Activated CD8-positive, alpha-beta memory T cell treated with anti-CD3 and anti-CD28 coated beads, Interleukin-2, amount 10 ng/mL, durations not matched to agents 7 days and 5 days (primary cell): ENCODE measurements at regions of chr10 and their contacts with region 1.

Region 1: GRCh38 chr10:69914398-69915214 is 112.9 kb downstream of the COL13A1 start:
- DNase-seq: peak; percentile 72
- ATAC-seq: peak; percentile 85
- H3K4me3 Mint-ChIP-seq: no peak overlapping the region
- H3K27ac Mint-ChIP-seq: no peak overlapping the region
- H3K4me1 Mint-ChIP-seq: no peaks in the 10 kb centered on the region
- H3K27me3 Mint-ChIP-seq: peaks cover 9% of the 10 kb centered on the region

Region 2: GRCh38 chr10:69609077-69609476 is 305.5 kb before region 1 on chr10:
- CTCF ChIA-PET with region 1: no interaction called
- DNase-seq: no peak
- ATAC-seq: no peak
- H3K4me3 Mint-ChIP-seq: no peak overlapping the region
- H3K27ac Mint-ChIP-seq: no peak overlapping the region
- H3K4me1 Mint-ChIP-seq: no peaks in the 10 kb centered on the region
- H3K27me3 Mint-ChIP-seq: peaks cover 18% of the 10 kb centered on the region

Region 3: DNA sequence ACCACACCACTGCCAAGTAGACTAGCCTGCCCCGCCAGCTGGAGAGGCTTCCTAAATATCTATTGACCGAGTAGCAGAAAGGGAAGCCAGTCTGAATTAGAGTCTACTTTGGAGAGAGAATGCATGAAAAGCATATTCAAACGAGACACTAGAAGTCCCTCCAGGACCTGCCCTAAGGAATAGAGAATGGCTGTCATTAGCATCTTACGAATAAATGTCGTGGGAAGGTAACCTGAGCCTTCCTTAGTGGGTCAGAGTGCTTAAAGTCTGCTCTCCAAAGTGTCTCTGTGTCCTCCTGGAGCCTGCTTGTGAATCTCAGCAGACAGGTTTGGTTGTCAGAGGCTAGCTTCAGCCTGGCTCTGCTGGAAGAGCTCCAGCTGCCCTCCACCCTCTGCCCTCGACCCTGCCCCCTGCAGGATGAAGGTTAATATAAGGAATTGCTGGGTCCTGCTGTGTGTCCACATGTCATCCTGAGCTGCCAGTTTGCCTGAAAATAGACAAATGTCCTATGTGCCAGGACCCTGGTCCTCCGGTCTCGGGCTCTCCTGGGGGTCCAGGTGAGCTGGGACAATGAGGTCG is 251.1 kb before region 1 on chr10:
- CTCF ChIA-PET with region 1: no interaction called
- DNase-seq: no peak
- ATAC-seq: no peak
- H3K4me3 Mint-ChIP-seq: no peak overlapping the region
- H3K27ac Mint-ChIP-seq: no peak overlapping the region
- H3K4me1 Mint-ChIP-seq: no peaks in the 10 kb centered on the region
- H3K27me3 Mint-ChIP-seq: peaks cover 28% of the 10 kb centered on the region

Region 4: DNA sequence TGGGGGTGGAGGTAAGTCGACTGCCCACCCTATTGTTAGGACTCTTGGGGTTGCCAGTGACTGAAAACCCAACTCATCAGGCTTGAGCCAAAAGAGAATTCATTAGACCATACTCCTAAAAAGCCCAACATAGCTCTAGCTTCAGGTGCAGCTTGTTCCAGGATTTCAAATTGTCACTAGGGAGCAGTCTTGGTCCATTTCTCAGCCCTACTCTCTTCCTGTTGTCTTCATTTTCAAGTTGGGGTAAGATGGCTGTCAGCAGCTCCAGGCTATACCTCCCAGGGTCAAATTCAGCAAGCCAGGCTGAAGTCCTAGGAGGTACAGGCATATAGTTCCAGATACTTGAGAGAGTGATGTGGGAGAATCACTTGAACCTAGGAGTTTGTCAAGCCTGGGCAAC is 127.8 kb before region 1 on chr10:
- CTCF ChIA-PET with region 1: interaction called, 10 read pairs
- DNase-seq: no peak
- ATAC-seq: no peak
- H3K4me3 Mint-ChIP-seq: no peak overlapping the region
- H3K27ac Mint-ChIP-seq: no peak overlapping the region
- H3K4me1 Mint-ChIP-seq: no peaks in the 10 kb centered on the region
- H3K27me3 Mint-ChIP-seq: peaks cover 13% of the 10 kb centered on the region

Region 5: GRCh38 chr10:69861251-69862240 is 53.1 kb before region 1 on chr10:
- CTCF ChIA-PET with region 1: interaction called, 14 read pairs
- DNase-seq: no peak
- ATAC-seq: peak; percentile 64
- H3K4me3 Mint-ChIP-seq: no peak overlapping the region
- H3K27ac Mint-ChIP-seq: no peak overlapping the region
- H3K4me1 Mint-ChIP-seq: peaks cover 5% of the 10 kb centered on the region
- H3K27me3 Mint-ChIP-seq: peaks cover 2% of the 10 kb centered on the region

Region 6: GRCh38 chr10:69904533-69904932 is 10.1 kb before region 1 on chr10:
- CTCF ChIA-PET with region 1: interaction called, 14 read pairs
- DNase-seq: no peak
- ATAC-seq: no peak
- H3K4me3 Mint-ChIP-seq: no peak overlapping the region
- H3K27ac Mint-ChIP-seq: no peak overlapping the region
- H3K4me1 Mint-ChIP-seq: no peaks in the 10 kb centered on the region
- H3K27me3 Mint-ChIP-seq: peaks cover 4% of the 10 kb centered on the region

Region 7: GRCh38 chr10:69925111-69925510 is 10.5 kb after region 1 on chr10:
- CTCF ChIA-PET with region 1: interaction called, 20 read pairs
- DNase-seq: no peak
- ATAC-seq: no peak
- H3K4me3 Mint-ChIP-seq: no peak overlapping the region
- H3K27ac Mint-ChIP-seq: no peak overlapping the region
- H3K4me1 Mint-ChIP-seq: no peaks in the 10 kb centered on the region
- H3K27me3 Mint-ChIP-seq: peaks cover 19% of the 10 kb centered on the region

Region 8: DNA sequence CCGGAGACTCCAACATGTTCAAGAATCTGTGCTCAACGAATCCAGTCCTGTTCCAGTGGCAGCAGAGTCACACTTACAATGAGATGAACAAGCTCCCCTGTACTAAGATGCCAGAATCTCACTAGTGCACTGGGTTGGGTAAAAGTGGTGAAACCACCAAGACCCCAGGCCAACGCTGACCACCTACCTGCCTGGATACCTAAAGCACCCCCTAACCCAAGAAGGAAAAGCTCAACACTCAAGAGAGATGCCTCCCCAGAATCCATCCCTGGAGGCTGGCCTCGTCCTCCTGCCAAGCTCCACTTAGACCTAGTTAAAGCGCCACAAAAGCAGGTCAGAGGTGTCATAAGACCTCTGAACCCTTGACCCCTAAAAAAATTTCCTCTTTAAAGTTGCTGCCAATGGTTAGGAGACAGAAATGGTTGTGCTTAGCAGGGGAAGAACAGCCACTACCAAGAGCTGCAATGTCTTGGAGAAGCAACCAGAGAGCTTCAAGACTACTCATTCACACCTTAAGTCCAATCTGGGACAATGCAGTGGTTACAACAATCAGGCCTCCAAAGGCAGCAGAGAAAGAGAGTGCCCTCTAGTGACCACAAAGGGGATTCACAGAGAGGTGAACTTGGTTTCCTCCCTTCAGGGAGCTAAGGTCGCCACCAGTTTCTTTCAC is 43.4 kb after region 1 on chr10:
- CTCF ChIA-PET with region 1: interaction called, 12 read pairs
- DNase-seq: peak; percentile 52
- ATAC-seq: peak; percentile 74
- H3K4me3 Mint-ChIP-seq: no peak overlapping the region
- H3K27ac Mint-ChIP-seq: no peak overlapping the region
- H3K4me1 Mint-ChIP-seq: no peaks in the 10 kb centered on the region
- H3K27me3 Mint-ChIP-seq: peaks cover 13% of the 10 kb centered on the region